ENCODE measurements at regions of chr5 and their contacts with region 1.

Region 1: DNA sequence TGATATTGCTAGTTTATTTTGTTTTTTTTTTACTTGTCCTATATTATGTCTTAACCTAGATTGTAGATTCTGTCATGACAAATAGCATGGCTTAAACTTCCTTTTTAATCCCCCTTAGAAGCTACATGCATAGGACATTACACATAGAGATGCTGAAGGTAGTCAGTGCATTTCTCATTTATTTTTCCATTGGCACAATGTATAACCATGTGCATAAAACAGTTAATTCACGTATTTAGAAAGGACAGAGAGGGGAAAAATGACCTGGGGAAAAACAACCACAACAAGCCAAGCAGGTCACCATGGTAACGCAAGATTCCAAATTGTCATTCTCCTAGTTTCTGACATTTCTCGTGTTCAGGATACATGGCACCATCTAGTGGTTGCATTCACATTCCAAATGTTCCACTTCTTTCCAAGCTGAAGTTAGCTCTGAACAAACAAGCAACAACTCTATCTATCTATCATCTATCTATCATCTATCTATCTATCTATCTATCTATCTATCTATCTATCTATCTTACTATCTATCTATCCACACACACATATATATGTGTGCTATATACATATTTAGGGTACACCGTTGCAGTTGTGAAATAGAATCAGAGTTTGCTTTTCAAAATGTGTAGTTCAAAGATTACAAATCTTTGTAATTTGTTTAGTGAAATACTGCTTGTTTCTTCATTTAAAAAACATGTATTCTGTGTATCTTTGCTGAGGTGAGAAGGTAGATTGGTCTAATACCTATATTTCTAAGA is 487.2 kb upstream of the ST8SIA4 start:
- DNase-seq: peak; percentile 26
- H3K4me3 ChIP-seq: no peak overlapping the region
- H3K27ac ChIP-seq: no peak overlapping the region
- H3K4me1 ChIP-seq: no peaks in the 10 kb centered on the region
- H3K27me3 ChIP-seq: no peaks in the 10 kb centered on the region
- CTCF ChIP-seq: peak; percentile 55 to 67

Region 2: GRCh38 chr5:100623719-100624118 is 766.6 kb before region 1 on chr5:
- CTCF ChIA-PET with region 1: no interaction called
- dilution Hi-C with region 1: no loop called
- in situ Hi-C with region 1: loop called in 1 of 2 experiments (anchors 25 kb)
- intact Hi-C with region 1: loop called (anchors 1 kb)
- DNase-seq: peak; percentile 24
- H3K4me3 ChIP-seq: no peak overlapping the region
- H3K27ac ChIP-seq: no peak overlapping the region
- H3K4me1 ChIP-seq: no peaks in the 10 kb centered on the region
- H3K27me3 ChIP-seq: no peaks in the 10 kb centered on the region
- CTCF ChIP-seq: peak; percentile 44 to 68

Region 3: DNA sequence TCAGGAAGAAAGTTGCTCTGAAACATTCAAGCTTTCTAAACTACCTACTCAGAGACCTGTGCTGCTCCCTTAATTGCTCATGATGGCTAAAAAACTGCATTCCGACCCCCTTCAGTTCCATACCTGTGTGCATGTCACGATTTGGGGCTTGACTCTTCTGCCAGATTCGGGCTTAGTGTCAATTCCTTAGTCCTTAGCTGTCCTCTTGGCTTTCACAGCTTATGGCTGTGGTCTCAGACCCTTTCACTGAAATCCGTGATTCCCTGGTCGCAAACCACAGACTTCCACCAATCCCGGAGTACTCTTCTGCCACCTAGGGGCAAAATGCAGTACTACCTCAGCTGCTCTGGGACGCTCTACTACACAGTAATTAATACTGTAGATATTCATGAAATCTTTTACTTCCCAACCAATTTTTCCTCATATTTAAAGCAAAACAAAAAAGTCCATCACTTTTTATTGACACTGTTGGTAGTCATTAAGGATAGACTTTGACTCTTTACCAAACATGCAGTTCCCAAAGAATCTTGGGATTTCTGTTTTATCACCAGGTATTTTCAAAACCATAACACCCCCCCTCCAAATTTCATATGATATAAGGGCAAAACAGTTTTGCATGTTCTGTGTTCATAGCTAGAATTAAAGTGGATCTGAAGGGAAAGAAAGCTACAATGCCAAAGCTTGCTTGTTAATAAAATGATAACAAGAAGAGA is 288.3 kb after region 1 on chr5:
- CTCF ChIA-PET with region 1: no interaction called
- dilution Hi-C with region 1: no loop called
- in situ Hi-C with region 1: no loop called
- intact Hi-C with region 1: loop called (anchors 5 kb)
- DNase-seq: peak; percentile 32
- H3K4me3 ChIP-seq: no peak overlapping the region
- H3K27ac ChIP-seq: no peak overlapping the region
- H3K4me1 ChIP-seq: no peaks in the 10 kb centered on the region
- H3K27me3 ChIP-seq: no peaks in the 10 kb centered on the region
- CTCF ChIP-seq: peak; percentile 90

Measured in mammary epithelial cell (primary cell).